ENCODE measurements at regions of chr15 and their contacts with region 1.

Region 1: GRCh38 chr15:88759872-88760271 is 43.4 kb upstream of the ACAN start:
- DNase-seq: no peak
- ATAC-seq: no peak
- H3K4me3 ChIP-seq: no peak overlapping the region
- H3K27ac ChIP-seq: no peak overlapping the region
- H3K4me1 ChIP-seq: no peaks in the 10 kb centered on the region
- H3K27me3 ChIP-seq: peaks cover 28% of the 10 kb centered on the region
- CTCF ChIP-seq: no peak
- POLR2A ChIP-seq: no peak
- RAD21 ChIP-seq: no peak

Region 2: GRCh38 chr15:87450314-87450713 is 1309.6 kb before region 1 on chr15:
- CTCF ChIA-PET with region 1: no interaction called
- POLR2A ChIA-PET with region 1: interaction called, 16 read pairs
- dilution Hi-C with region 1: no loop called
- in situ Hi-C with region 1: no loop called
- intact Hi-C with region 1: no loop called
- DNase-seq: no peak
- ATAC-seq: no peak
- H3K4me3 ChIP-seq: no peak overlapping the region
- H3K27ac ChIP-seq: no peak overlapping the region
- H3K4me1 ChIP-seq: no peaks in the 10 kb centered on the region
- H3K27me3 ChIP-seq: no peaks in the 10 kb centered on the region
- CTCF ChIP-seq: no peak
- POLR2A ChIP-seq: no peak
- RAD21 ChIP-seq: no peak

Measured in IMR-90 (cell line).